ENCODE measurements at regions of chr7 and their contacts with region 1.

Region 1: GRCh38 chr7:158704704-158705468 is at the start of gene NCAPG2:
- DNase-seq: peak; percentile 98
- ATAC-seq: peak; percentile 95
- H3K4me3 Mint-ChIP-seq: peak within 1 kb of the TSS; percentile 72
- H3K27ac Mint-ChIP-seq: peak within 1 kb of the TSS; percentile 37
- H3K4me1 Mint-ChIP-seq: peaks cover 41% of the 10 kb centered on the region
- H3K27me3 Mint-ChIP-seq: no peaks in the 10 kb centered on the region
- CTCF ChIP-seq: no peak
- total RNA-seq, gene NCAPG2: 96.8 to 111 TPM (median 99.2 TPM) in 3 replicates

Region 2: GRCh38 chr7:158734861-158735260 is 30.0 kb after region 1 on chr7:
- CTCF ChIA-PET with region 1: interaction called, 18 read pairs
- POLR2A ChIA-PET with region 1: interaction called, 3 read pairs
- DNase-seq: no peak
- ATAC-seq: no peak
- H3K4me3 Mint-ChIP-seq: no peak overlapping the region
- H3K27ac Mint-ChIP-seq: peak overlapping the region; percentile 36
- H3K4me1 Mint-ChIP-seq: peaks cover 31% of the 10 kb centered on the region
- H3K27me3 Mint-ChIP-seq: no peaks in the 10 kb centered on the region
- CTCF ChIP-seq: no peak

Region 3: DNA sequence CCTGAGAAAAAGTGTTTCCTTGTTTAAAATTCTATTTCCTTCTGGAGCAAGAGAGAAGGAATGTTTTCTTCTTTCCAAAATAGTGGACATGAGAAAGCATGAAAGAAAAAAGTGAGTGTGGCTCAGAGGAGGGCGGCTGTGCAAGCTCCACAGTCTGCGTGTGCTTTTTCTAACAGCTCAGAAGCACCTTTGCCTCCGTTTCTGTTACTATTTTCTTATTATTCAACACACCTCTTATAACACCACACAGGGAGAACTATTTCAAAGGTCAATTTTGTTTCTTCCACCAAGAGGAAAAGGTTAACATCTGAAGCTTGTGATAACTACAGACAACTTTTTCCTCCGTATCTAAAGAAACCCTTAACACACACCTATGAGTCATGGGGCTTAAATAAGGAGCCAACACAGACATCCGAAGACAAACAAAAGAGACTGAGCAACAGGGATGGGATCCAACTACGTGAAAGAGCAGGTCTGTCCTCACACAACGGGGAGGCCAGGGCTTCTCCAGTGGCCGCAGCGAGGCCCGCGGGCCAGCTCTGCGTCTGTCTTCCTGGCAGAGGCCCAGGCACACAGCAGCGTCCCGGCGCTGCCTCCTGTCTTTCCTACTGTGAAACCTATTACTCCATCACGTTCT is 35.9 kb after region 1 on chr7:
- CTCF ChIA-PET with region 1: interaction called, 10 read pairs
- POLR2A ChIA-PET with region 1: no interaction called
- DNase-seq: no peak
- ATAC-seq: no peak
- H3K4me3 Mint-ChIP-seq: no peak overlapping the region
- H3K27ac Mint-ChIP-seq: peak overlapping the region; percentile 88; the same call in 1 of the 2 replicates
- H3K4me1 Mint-ChIP-seq: no peaks in the 10 kb centered on the region
- H3K27me3 Mint-ChIP-seq: no peaks in the 10 kb centered on the region; the same call in 1 of the 2 replicates
- CTCF ChIP-seq: no peak